Naive thymus-derived CD8-positive, alpha-beta T cell (primary cell): ENCODE measurements at regions of chr21 and their contacts with region 1.

Region 1: GRCh38 chr21:17819114-17819876 is at the start of gene C21orf91:
- DNase-seq: peak; percentile 75 to 97 (median 87)
- ATAC-seq: peak; percentile 82 to 89
- H3K4me3 Mint-ChIP-seq: peak within 1 kb of the TSS; percentile 89 to 99 (median 98)
- H3K27ac Mint-ChIP-seq: peak within 1 kb of the TSS; percentile 77 to 100 (median 99)
- H3K4me1 Mint-ChIP-seq: peaks cover 15 to 53% (median 44%) of the 10 kb centered on the region in 4 donors
- H3K27me3 Mint-ChIP-seq: no peaks in the 10 kb centered on the region
- polyA plus RNA-seq, gene C21orf91: 30.7 to 40.3 (median 30.7) TPM

Region 2: GRCh38 chr21:17780539-17780938 is 38.8 kb before region 1 on chr21:
- POLR2A ChIA-PET with region 1: interaction called, 63 read pairs
- DNase-seq: peak in 7 of 10 donors; percentile 13 to 47 (median 33)
- ATAC-seq: peak; percentile 45 to 46
- H3K4me3 Mint-ChIP-seq: peak overlapping the region in 9 of 10 donors; percentile 40 to 71 (median 63)
- H3K27ac Mint-ChIP-seq: peak overlapping the region; percentile 63 to 95 (median 90)
- H3K4me1 Mint-ChIP-seq: peaks cover 55 to 92% (median 72%) of the 10 kb centered on the region in 4 donors
- H3K27me3 Mint-ChIP-seq: no peaks in the 10 kb centered on the region

Region 3: GRCh38 chr21:17798796-17799195 is 20.5 kb before region 1 on chr21:
- POLR2A ChIA-PET with region 1: interaction called, 15 read pairs
- DNase-seq: no peak
- ATAC-seq: no peak
- H3K4me3 Mint-ChIP-seq: no peak overlapping the region
- H3K27ac Mint-ChIP-seq: peak overlapping the region in 6 of 10 donors; percentile 2 to 90 (median 70)
- H3K4me1 Mint-ChIP-seq: peaks cover 16 to 67% (median 54%) of the 10 kb centered on the region in 4 donors
- H3K27me3 Mint-ChIP-seq: no peaks in the 10 kb centered on the region

Region 4: DNA sequence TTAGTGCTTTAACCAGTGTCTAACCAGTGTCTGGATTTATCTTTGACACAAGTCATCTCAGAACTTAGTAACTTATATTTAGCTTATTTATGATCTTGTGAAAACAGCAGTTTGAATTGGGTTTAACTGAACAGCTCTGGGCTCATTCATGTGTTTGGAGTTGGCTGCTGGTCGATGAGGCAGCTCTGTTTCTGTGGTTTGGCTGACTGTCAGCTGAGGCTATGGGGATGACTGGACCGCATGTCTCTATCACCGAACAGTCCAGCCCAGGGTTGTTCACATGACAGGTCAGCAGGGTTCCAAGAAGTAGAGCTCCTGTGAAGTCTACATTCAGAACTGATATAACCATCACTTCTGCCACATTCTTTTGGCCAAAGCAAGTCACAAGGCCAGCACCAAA is 28.9 kb after region 1 on chr21:
- POLR2A ChIA-PET with region 1: no interaction called
- DNase-seq: no peak
- ATAC-seq: no peak
- H3K4me3 Mint-ChIP-seq: no peak overlapping the region
- H3K27ac Mint-ChIP-seq: peak overlapping the region in 1 of 10 donors; percentile 23
- H3K4me1 Mint-ChIP-seq: no peaks in the 10 kb centered on the region
- H3K27me3 Mint-ChIP-seq: no peaks in the 10 kb centered on the region

Region 5: DNA sequence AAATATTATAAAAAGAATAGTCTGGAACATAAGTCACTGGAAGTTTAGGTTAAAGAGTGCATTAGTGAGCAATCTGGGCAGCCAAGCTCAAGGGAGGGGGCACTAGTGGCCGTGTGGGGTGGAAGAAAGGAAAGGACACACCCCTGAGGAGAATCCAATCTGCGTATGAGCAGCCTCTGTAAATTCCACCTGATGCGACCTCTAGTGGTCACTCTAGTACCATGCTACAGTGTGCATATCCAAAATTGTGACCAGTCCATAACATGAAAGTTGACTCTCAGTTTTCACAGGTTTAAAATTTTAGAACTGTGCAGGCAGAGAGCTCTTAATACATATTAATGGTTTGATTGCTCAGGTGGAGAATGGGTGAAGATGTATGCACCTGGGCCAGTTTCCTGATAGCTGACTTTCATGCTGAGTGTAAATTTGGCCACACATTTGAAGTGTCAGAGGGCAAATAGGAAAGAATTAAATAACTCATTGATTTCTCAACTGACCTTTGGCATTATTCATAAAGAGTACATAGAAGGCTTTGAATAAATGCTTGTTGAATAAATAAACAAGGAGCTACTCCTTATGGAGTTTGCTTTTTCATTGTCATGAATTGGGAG is 105.8 kb after region 1 on chr21:
- POLR2A ChIA-PET with region 1: no interaction called
- DNase-seq: peak in 9 of 10 donors; percentile 14 to 71 (median 36)
- ATAC-seq: peak; percentile 76 to 95
- H3K4me3 Mint-ChIP-seq: no peak overlapping the region
- H3K27ac Mint-ChIP-seq: no peak overlapping the region
- H3K4me1 Mint-ChIP-seq: peaks cover 0 to 6% (median 4%) of the 10 kb centered on the region in 4 donors
- H3K27me3 Mint-ChIP-seq: peaks cover 0 to 4% (median 2%) of the 10 kb centered on the region in 5 donors